Activated T-helper 2 cell treated with anti-CD3 and anti-CD28 coated beads, Interferon-gamma antibody, Interleukin-2, Interleukin-4, amounts not matched to agents 10 μg/mL and 5 μg/mL and 100 μg/mL, durations not matched to agents 14 hours and 24 hours and 36 hours (primary cell): ENCODE measurements at regions of chr5 and their contacts with region 1.

Region 1: DNA sequence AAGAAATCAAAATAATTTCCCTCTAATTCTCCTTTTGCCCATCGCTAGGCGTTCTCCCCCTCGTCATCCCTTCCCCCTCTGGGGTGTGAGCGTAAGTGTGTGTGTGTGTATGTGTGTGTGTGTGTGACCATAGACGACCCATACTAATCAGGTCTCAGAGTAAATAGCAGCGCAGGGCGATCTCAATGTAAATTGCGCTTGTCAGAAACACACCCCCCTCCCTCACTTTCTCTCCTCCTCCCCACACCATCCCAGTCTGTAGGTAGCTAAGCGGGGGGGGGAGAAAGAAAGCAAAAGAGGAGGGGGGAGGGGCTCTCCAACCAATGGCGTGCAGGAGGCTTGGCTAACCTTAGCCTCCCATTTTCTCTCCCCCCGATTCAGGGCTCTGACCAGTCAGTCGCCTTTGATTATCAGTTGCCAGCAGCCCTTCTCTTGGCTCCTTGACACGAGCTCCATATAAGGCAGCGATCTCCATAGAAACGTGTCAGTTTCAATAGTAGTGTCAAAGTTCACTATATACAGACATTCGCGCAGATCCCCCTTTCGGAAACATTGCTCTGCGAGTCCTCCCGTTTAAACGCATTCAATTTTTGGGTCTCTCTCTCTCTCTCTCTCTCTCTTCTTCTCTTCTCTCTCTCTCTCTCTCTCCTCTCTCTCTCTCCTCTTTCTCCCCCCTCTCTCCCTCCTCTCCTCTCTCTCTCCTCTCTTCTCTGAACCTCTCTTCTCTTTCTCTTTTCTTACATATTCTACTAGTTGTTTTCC is at the start of gene NR2F1:
- DNase-seq: no peak
- H3K4me3 Mint-ChIP-seq: peak within 1 kb of the TSS; percentile 33
- H3K27ac Mint-ChIP-seq: no peak within 1 kb of the TSS
- H3K4me1 Mint-ChIP-seq: peaks cover 18% of the 10 kb centered on the region
- H3K27me3 Mint-ChIP-seq: peaks cover 46% of the 10 kb centered on the region
- total RNA-seq, gene NR2F1: not detected in 2 replicates

Region 2: GRCh38 chr5:93570294-93571113 is 12.4 kb before region 1 on chr5:
- intact Hi-C with region 1: loop called (anchors 1 kb)
- DNase-seq: no peak
- H3K4me3 Mint-ChIP-seq: no peak overlapping the region
- H3K27ac Mint-ChIP-seq: no peak overlapping the region
- H3K4me1 Mint-ChIP-seq: no peaks in the 10 kb centered on the region
- H3K27me3 Mint-ChIP-seq: peaks cover 68% of the 10 kb centered on the region

Region 3: DNA sequence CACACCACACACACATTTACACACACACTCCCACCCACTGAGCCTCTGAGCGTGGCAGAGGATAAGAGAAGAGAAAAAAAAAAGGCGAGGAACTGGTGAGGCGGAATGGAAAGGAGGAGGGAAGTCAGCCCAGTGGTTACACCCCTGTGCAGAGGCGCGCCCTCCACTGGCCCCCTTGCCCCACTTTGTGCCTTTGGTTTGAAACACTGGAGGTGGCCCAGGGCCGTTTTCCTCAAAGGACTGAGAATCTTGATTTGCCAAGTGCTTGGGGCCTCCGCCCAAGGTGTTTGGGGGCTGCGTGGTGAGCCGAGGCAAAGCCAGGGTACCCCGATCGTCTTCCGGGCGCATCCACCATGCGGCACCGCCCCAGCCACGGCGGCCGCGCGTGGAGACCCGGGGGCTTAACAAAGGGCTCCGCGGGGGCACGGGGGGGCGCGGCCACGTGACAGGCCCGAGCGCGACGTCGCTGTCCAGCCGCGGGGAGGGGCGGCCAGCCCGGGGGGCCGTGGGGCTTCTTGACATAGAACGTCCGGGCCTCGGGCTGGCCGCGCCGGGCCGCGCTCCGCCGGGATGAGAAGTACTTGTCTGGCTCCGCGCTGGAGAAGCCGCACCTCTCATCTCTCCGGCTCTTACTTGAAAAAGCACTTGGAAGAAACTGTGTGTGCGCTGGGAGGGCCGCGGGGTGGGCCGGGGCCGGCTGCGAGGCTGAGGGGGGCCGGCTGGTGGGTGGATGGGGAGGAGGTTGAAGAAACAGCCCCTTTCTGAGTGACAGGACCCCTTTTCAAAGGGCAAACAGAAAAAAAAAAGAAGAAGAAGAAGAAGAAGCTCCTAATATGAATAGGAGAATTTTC is 21.2 kb after region 1 on chr5:
- intact Hi-C with region 1: no loop called
- DNase-seq: no peak
- H3K4me3 Mint-ChIP-seq: no peak overlapping the region
- H3K27ac Mint-ChIP-seq: no peak overlapping the region
- H3K4me1 Mint-ChIP-seq: peaks cover 3% of the 10 kb centered on the region
- H3K27me3 Mint-ChIP-seq: peaks cover 42% of the 10 kb centered on the region

Region 4: GRCh38 chr5:93800988-93801811 is 218.3 kb after region 1 on chr5:
- intact Hi-C with region 1: loop called (anchors 2 kb)
- DNase-seq: no peak
- H3K4me3 Mint-ChIP-seq: no peak overlapping the region
- H3K27ac Mint-ChIP-seq: no peak overlapping the region
- H3K4me1 Mint-ChIP-seq: peaks cover 2% of the 10 kb centered on the region
- H3K27me3 Mint-ChIP-seq: no peaks in the 10 kb centered on the region

Region 5: GRCh38 chr5:93915142-93915553 is 332.3 kb after region 1 on chr5:
- intact Hi-C with region 1: loop called (anchors 2 kb)
- DNase-seq: no peak
- H3K4me3 Mint-ChIP-seq: no peak overlapping the region
- H3K27ac Mint-ChIP-seq: no peak overlapping the region
- H3K4me1 Mint-ChIP-seq: no peaks in the 10 kb centered on the region
- H3K27me3 Mint-ChIP-seq: no peaks in the 10 kb centered on the region